ENCODE measurements at regions of chr18 and their contacts with region 1.

Region 1: DNA sequence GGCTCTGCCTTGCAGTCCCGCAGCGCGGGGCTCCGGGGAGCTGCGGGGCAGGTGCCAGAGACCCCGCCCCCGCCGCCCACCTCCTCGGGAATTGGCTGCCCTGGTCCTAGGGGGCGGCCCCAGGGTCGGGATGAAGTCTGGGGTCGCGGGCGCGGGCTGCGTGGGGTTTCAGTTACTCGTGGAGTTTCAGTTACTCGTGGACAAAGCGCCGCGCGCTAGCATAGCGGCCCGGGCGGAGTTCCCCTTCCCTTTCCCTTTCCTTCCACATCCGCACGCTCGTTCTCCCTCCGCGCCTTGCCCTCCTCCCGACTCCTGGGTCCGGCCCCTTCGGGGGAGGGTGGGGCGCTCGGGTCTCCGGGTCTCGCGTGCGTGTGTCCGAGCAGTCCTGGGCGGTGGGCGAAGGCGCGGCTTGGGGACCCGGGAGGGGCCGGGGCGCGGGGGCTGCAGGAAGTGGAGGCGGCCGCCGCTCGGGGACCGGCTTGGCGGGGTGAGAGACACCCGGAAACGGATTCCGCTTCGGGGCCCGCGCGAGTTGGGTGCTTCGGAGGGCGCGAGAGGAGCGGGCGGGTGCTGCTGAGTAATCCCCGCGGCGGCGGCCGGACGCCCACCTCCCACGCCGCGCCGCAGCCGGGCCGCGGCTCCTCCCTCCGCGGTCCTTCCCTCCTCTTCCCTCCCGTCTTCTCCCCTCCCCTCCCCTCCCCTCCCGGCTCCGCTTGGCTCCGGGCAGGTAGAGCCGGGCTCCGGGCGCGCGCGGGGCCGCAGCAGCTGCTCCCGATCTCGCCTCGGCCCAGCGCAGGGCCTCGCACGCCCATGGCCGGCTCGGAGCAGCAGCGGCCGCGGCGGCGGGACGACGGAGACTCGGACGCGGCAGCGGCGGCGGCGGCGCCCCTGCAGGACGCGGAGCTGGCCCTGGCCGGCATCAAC is at the start of gene TTC39C:
- DNase-seq: peak; percentile 78 to 88 (median 82)
- H3K4me3 ChIP-seq: peak within 1 kb of the TSS; percentile 73 to 83
- H3K4me3 Mint-ChIP-seq: peak within 1 kb of the TSS; percentile 92 to 100 (median 96)
- H3K27ac ChIP-seq: peak within 1 kb of the TSS; percentile 75
- H3K27ac Mint-ChIP-seq: peak within 1 kb of the TSS; percentile 90 to 98 (median 94)
- H3K4me1 ChIP-seq: peaks cover 77% of the 10 kb centered on the region
- H3K4me1 Mint-ChIP-seq: peaks cover 53 to 87% (median 64%) of the 10 kb centered on the region in 4 donors
- H3K27me3 ChIP-seq: no peaks in the 10 kb centered on the region
- H3K27me3 Mint-ChIP-seq: no peaks in the 10 kb centered on the region
- total RNA-seq, gene TTC39C: 168 to 180 TPM

Region 2: GRCh38 chr18:23619388-23619881 is 394.9 kb before region 1 on chr18:
- CTCF ChIA-PET with region 1: no interaction called
- POLR2A ChIA-PET with region 1: no interaction called
- intact Hi-C with region 1: loop called (anchors 2 kb)
- DNase-seq: peak in 3 of 5 donors; percentile 5 to 6 (median 5)
- H3K4me3 ChIP-seq: peak overlapping the region in 1 of 2 donors; percentile 3
- H3K4me3 Mint-ChIP-seq: peak overlapping the region; percentile 46 to 81 (median 70)
- H3K27ac ChIP-seq: no peak overlapping the region
- H3K27ac Mint-ChIP-seq: peak overlapping the region in 1 of 7 donors; percentile 1
- H3K4me1 ChIP-seq: peaks cover 11% of the 10 kb centered on the region
- H3K4me1 Mint-ChIP-seq: peaks cover 0 to 7% (median 3%) of the 10 kb centered on the region in 4 donors
- H3K27me3 ChIP-seq: peaks cover 31% of the 10 kb centered on the region
- H3K27me3 Mint-ChIP-seq: peaks cover 34 to 36% of the 10 kb centered on the region in 2 donors

Region 3: DNA sequence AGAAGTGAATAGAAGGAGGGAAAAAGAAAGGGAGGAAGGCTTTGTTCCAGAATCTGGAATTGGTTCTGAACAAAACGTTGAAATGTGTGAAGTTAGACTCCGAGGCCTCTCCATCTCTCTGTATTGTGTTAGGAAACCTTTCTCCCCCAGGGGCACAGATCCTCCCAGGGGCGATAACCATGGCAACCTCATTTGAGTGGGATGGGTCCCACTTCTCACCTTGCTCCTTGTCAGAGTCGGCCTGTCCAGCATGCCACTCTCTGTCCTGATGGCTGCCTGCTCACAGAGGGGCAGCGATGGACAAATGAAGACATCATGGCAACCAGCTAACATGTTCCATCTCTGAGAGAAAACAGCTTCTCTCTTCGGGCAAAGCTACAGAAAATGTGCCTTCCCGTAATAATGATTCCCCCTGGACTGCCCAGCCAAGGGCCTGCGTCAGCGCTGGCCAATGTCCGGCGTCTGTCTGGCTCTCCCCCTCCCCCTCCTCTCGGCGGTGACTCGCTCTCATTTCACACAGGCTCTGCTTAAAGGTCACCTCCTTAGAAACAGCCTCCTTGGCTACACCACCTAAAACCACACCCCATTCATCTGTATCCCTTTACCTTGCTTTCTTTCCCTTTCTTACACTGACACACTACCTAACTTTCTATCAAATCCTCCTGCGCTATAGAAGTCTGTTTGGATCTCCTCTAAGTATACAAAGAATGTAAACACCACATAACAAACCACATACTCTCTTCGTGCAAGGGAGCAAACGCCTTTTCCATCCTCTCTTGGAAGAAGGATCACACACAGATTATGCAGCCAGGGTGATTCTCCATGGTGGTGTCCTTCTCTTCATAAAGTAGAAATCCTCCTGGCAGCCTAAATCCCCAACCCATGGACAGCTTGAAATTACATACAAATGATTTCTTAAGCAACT is 31.9 kb before region 1 on chr18:
- CTCF ChIA-PET with region 1: interaction called, 6 read pairs
- POLR2A ChIA-PET with region 1: interaction called, 241 read pairs
- intact Hi-C with region 1: no loop called
- DNase-seq: no peak
- H3K4me3 ChIP-seq: no peak overlapping the region
- H3K4me3 Mint-ChIP-seq: peak overlapping the region in 4 of 8 donors; percentile 4 to 47 (median 14)
- H3K27ac ChIP-seq: no peak overlapping the region
- H3K27ac Mint-ChIP-seq: peak overlapping the region in 5 of 7 donors; percentile 2 to 89 (median 74)
- H3K4me1 ChIP-seq: peaks cover 35% of the 10 kb centered on the region
- H3K4me1 Mint-ChIP-seq: peaks cover 30 to 65% (median 50%) of the 10 kb centered on the region in 4 donors
- H3K27me3 ChIP-seq: no peaks in the 10 kb centered on the region
- H3K27me3 Mint-ChIP-seq: no peaks in the 10 kb centered on the region

Region 4: GRCh38 chr18:24002483-24002882 is 11.8 kb before region 1 on chr18:
- CTCF ChIA-PET with region 1: interaction called, 11 read pairs
- POLR2A ChIA-PET with region 1: interaction called, 57 read pairs
- intact Hi-C with region 1: loop called (anchors 1 kb)
- DNase-seq: no peak
- H3K4me3 ChIP-seq: no peak overlapping the region
- H3K4me3 Mint-ChIP-seq: peak overlapping the region in 7 of 8 donors; percentile 37 to 80 (median 68)
- H3K27ac ChIP-seq: peak overlapping the region; percentile 74
- H3K27ac Mint-ChIP-seq: peak overlapping the region; percentile 86 to 99 (median 91)
- H3K4me1 ChIP-seq: peaks cover 98% of the 10 kb centered on the region
- H3K4me1 Mint-ChIP-seq: peaks cover 60 to 87% (median 72%) of the 10 kb centered on the region in 4 donors
- H3K27me3 ChIP-seq: no peaks in the 10 kb centered on the region
- H3K27me3 Mint-ChIP-seq: no peaks in the 10 kb centered on the region

Region 5: DNA sequence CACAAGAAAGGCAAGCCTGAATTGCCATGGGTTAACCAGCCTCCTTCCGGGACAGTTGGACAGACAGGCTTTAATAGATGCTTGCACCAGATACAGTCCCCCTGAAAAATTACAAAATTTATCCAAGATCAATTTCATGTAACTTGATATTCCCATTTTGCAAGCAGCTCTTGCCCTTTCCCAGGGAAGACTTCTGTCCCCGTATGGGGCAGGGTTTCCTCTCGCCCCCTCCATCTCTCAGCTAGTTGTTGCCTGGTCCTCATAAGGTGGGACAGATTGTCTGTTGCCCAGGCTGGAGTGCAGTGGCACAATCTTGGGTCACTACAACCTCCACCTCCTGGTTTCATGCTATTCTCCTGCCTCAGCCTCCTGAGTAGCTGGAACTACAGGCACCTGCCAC is 61.4 kb after region 1 on chr18:
- CTCF ChIA-PET with region 1: interaction called, 4 read pairs
- POLR2A ChIA-PET with region 1: interaction called, 7 read pairs
- intact Hi-C with region 1: loop called (anchors 1 kb)
- DNase-seq: no peak
- H3K4me3 ChIP-seq: no peak overlapping the region
- H3K4me3 Mint-ChIP-seq: peak overlapping the region in 5 of 8 donors; percentile 48 to 70 (median 64)
- H3K27ac ChIP-seq: no peak overlapping the region
- H3K27ac Mint-ChIP-seq: peak overlapping the region; percentile 79 to 97 (median 87)
- H3K4me1 ChIP-seq: peaks cover 22% of the 10 kb centered on the region
- H3K4me1 Mint-ChIP-seq: peaks cover 38 to 78% (median 57%) of the 10 kb centered on the region in 4 donors
- H3K27me3 ChIP-seq: no peaks in the 10 kb centered on the region
- H3K27me3 Mint-ChIP-seq: no peaks in the 10 kb centered on the region

Region 6: GRCh38 chr18:24219561-24220317 is 205.4 kb after region 1 on chr18:
- CTCF ChIA-PET with region 1: no interaction called
- POLR2A ChIA-PET with region 1: no interaction called
- intact Hi-C with region 1: no loop called
- DNase-seq: no peak
- H3K4me3 ChIP-seq: no peak overlapping the region
- H3K4me3 Mint-ChIP-seq: no peak overlapping the region
- H3K27ac ChIP-seq: no peak overlapping the region
- H3K27ac Mint-ChIP-seq: no peak overlapping the region
- H3K4me1 ChIP-seq: no peaks in the 10 kb centered on the region
- H3K4me1 Mint-ChIP-seq: no peaks in the 10 kb centered on the region
- H3K27me3 ChIP-seq: no peaks in the 10 kb centered on the region
- H3K27me3 Mint-ChIP-seq: peaks cover 0 to 3% of the 10 kb centered on the region in 2 donors

Measured in CD4-positive, alpha-beta memory T cell (primary cell).